ENCODE measurements at regions of chr1 and their contacts with region 1.

Region 1: DNA sequence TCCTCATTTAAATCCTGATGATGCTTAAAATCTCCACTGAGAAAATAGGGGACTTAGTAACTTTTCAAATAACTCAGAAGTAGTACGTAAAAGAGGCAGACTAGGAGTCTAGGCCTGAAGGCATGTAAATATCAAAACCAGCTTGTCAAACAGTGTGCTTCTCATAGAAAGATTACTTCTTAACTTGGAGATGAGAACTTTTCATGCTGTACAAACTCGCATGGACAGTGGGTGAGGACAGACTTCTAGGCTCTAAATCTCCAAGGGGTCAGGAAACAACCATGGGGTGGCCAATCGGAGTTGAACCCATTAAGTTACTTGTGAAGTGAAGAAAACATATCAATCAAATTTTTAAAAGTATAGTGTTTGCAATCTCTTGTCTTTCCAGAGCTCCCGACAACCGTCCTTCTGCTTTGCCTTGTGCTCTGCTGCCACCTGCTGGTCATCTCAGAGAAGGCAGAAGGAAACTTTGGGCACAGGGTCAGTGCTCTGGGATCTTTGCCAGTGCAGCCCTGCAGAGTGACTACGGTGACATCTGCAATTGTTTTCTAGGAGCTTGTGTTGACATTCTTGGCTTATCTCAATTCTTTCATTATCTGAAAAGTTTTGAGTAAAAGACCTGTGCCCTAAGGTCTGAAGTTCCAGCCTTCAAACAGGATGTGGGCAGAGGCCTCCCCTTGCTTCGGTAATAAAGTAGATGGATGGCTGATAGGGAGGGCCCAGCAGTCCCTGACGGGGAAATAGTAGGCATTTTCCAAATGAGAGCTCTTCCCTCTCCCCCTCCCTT is 105.1 kb upstream of the PDE4B start:
- DNase-seq: no peak
- H3K4me3 ChIP-seq: no peak overlapping the region
- H3K27me3 ChIP-seq: no peaks in the 10 kb centered on the region; the same call in 1 of the 2 replicates
- CTCF ChIP-seq: peak; percentile 91

Region 2: GRCh38 chr1:65067491-65068201 is 620.0 kb before region 1 on chr1:
- CTCF ChIA-PET with region 1: interaction called, 11 read pairs
- POLR2A ChIA-PET with region 1: interaction called, 3 read pairs
- DNase-seq: no peak
- H3K4me3 ChIP-seq: peak overlapping the region; percentile 84
- H3K27me3 ChIP-seq: peaks cover 1% of the 10 kb centered on the region; the same call in 1 of the 2 replicates
- CTCF ChIP-seq: no peak

Region 3: DNA sequence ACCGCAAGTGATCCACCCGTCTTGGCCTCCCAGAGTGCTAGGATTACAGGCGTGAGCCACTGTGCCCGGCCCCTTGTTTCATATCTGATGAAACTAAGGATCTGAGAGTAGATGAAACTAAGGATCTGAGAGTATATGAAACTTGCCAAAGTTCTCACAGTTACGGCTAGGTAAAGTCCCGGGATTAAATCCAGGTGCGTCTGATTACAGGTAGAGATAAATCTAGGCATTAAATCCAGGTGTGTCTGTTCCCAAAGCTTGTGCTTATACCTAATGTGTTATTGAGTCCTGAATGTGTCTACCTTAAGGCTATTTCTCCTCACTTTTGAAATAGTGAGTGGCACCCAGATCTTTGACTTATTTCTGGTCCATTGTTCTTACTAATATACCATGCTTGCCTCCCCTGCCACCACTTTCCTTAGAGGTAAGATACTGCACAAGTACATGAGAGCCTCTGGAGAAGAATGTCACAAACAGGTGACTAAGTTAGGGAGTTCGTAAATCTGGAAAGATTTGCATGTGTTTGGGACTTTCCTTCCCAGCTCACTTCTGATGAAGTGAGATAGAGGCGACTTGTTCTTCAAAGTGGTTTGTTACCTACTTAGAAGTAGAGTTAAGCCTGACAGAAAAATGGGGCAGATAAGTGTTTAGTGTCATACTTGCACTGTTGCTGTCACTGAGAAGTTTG is 473.1 kb before region 1 on chr1:
- CTCF ChIA-PET with region 1: interaction called, 17 read pairs
- POLR2A ChIA-PET with region 1: no interaction called
- DNase-seq: no peak
- H3K4me3 ChIP-seq: no peak overlapping the region
- H3K27me3 ChIP-seq: no peaks in the 10 kb centered on the region
- CTCF ChIP-seq: no peak

Region 4: DNA sequence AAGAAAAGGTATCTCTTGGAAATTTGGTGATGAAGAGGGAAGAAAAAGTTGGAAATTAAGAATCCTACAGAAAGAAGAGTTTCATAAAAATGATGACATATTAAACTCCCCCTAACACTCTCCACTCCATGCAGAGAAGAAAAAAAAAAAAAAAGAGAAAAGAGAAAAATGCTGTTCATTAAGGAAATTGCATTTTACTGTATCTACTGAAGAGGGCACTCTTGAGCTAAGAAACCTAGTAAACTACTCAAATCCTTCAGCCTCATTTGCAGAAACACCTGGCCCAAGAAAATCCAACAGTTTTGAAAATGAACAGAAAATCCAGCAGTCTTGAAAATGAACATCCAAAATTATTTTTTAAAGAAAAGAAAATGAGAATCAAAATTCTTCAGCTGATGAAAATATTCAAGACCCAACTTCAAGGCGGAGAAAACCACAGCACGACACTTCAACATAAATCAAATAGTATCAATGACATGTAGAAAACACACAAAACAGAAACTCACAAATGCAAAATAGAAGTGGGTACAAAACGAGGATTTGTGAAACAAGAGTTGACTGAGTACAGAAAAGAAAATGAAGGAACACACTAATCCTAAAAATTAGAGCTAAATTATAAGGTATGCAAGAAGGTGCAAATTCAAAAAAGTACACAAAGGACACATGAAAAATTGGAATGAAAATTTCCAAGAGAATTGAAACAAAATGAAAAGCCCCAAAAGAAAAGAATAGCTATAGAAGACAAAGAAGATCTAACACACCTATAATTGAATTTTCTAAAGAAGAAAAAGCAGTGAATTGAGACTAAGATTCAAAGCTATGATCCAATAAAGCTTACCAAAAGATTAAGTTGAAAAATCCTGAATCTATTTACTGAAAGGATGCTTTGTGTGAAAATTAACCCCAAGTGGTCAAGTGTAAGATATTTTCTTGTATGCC is 451.5 kb before region 1 on chr1:
- CTCF ChIA-PET with region 1: interaction called, 23 read pairs
- POLR2A ChIA-PET with region 1: interaction called, 3 read pairs
- DNase-seq: no peak
- H3K4me3 ChIP-seq: no peak overlapping the region
- H3K27me3 ChIP-seq: no peaks in the 10 kb centered on the region
- CTCF ChIP-seq: peak; percentile 53

Region 5: GRCh38 chr1:65703853-65704252 is 16.2 kb after region 1 on chr1:
- CTCF ChIA-PET with region 1: interaction called, 22 read pairs
- POLR2A ChIA-PET with region 1: no interaction called
- DNase-seq: no peak
- H3K4me3 ChIP-seq: no peak overlapping the region
- H3K27me3 ChIP-seq: peaks cover 5% of the 10 kb centered on the region
- CTCF ChIP-seq: no peak

Measured in BJ (cell line).